Posterior vena cava (tissue), 2 donors: ENCODE measurements at regions of chr9 and their contacts with region 1.

Region 1: DNA sequence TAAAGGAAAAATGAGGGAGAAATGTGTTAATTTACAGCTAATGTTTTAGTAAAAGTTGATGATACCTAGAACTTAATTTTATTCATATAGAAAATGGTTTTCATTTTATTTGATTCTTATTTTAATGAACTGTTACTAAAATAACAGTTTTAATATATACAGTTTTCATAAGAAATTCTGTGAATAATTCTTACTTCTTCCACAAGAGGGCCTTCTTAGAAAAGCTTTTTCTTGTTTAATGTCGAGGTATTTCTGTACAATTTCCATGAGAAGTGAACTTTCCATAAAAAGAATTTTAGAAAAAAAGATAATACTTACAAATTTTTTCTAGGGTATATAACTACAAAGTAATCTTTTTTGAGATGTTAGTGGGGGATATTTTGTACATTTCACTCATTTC is 73.9 kb downstream of the KLF9 start:
- DNase-seq: no peak

Region 2: DNA sequence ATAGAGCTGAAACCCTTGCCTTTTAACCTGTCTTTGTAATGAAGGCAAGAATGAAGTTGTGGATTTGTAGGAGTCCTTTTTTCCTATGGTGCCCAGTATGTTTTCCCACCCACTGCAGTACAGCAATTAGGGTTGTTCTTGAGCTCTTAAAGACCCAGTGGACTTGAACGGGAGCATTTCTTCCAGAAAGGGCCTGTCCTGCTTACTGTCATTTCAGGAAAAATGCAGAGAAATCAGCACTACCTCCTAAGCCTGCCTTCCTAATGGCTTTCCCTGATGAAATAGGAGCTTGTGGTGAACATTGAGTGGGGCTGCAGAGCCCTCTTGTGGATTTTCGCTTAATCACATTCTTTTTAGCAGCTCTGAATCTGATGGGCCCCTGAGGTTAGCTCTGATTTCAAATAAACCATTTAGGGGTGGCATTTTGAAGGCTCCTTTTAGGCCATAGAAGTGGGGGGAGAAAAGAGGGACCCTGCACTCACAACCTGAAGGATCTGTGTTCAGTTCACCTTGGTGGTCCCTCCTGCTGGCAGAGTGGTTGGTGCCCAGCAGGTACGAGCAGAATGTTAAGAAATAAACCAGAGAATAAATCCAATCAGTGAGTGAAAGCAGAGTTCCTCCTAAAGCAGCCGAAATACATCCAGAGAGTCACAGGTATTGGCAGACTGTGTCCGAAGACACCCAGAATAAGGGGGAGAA is 261.9 kb after region 1 on chr9:
- intact Hi-C with region 1: loop called in 1 of 2 experiments (anchors 5 kb)
- DNase-seq: no peak

Region 3: DNA sequence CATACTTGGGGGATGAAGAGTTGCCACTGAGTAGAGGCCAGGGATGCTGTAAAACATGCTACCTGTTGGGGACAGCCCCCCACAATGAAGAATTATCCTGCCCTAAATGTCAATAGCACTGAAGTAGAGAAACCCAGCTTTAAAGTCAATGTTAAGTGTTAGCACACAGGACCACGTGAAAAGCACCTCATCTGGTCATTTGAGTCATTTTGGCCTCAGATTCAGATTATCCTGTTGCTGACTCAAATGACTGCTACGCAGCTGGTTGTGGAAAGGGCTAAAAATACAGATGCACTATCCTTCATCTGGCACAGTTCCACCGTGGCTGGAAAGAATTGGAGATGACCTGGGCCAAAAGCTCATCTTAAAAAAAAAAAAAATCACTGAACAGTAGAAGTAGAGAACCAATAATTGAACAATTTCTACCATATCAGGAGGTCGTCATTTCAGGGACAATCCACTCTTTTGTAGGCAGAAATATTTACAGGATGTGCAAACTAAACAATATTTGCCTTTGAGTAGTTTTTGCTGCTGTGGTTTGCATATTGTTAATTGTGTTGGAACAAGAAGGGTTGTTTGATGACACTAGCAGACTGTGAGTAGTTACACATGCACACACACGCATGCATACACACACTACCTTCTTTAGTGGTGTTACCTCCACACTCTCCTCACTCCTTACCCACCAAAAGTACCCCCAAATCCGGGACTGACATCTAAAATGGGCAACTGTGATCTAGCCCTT is 269.1 kb after region 1 on chr9:
- intact Hi-C with region 1: loop called (anchors 2 to 5 kb)
- DNase-seq: no peak

Region 4: DNA sequence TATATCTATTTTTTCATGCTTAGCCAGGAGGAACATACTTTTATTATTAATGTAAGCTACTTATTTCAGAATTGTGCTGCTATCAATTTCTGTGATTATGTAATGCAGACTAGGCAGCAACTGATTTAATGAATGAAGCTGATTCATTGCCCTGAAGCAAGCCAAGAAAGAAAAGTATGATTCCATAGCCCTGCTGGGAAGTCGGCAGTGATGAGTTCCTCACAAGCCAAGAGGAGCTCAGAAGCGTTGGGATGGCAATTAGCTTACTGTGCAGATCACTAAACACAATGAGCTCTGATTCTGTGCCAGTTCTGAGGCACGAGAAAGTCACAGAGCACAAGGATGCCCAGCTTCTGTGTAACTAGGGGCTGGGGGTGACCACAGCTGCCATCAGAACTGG is 328.2 kb after region 1 on chr9:
- intact Hi-C with region 1: no loop called
- DNase-seq: no peak